MCF 10A (cell line): ENCODE measurements at regions of chr3 and their contacts with region 1.

Region 1: DNA sequence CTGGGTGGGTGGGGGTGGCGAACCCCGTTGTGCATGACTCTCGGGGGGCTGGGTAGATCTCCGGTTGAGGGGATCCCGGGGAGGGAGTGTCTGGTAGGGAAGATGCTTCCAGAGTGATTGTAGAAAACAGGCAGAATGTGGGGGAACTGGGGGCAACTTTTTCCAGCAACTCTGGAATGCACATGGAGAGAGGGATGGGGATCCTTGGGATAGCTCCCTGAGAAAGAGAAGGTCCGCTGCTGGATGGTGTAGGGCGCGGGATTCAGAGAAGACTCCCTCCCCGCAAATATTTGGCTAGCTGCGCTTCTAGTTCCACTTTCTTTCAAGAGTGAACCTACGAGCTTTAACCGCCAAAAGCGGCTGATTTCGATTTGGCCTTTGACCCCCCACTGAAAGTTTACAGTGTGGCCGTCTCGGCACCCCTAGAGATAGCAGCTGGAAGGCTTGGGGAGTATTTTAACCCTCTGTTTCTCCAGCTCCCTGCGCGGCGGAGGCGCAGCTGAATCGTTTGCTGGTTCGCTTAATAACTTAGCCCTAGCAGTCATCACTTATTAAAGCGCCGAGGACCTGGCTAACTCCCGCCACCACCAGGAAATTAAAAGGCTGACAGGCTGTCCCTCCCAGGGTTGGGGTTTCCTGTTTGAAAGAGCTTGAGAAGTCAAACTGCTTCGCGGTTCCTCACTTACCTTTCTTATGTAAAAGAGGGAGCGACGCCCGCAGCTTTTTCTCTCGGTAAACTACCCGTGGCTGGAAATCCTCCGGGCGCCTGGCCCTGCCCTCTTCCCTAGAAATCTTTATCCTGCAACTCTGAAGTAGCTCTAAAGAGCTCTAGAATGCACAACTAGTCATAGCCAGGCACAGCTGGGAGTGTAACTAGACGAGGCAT is 1.2 kb downstream of the PHLDB2 start:
- DNase-seq: peak; percentile 93
- H3K4me3 Mint-ChIP-seq: peak overlapping the region; percentile 98
- H3K27ac Mint-ChIP-seq: peak overlapping the region; percentile 94
- H3K4me1 Mint-ChIP-seq: peaks cover 50% of the 10 kb centered on the region
- H3K27me3 Mint-ChIP-seq: no peaks in the 10 kb centered on the region
- CTCF ChIP-seq: peak; percentile 61

Region 2: GRCh38 chr3:111712294-111713167 is 147.7 kb before region 1 on chr3:
- CTCF ChIA-PET with region 1: interaction called, 371 read pairs
- POLR2A ChIA-PET with region 1: interaction called, 207 read pairs
- intact Hi-C with region 1: loop called (anchors 1 kb)
- DNase-seq: peak; percentile 68
- H3K4me3 Mint-ChIP-seq: no peak overlapping the region
- H3K27ac Mint-ChIP-seq: peak overlapping the region; percentile 62
- H3K4me1 Mint-ChIP-seq: peaks cover 20% of the 10 kb centered on the region
- H3K27me3 Mint-ChIP-seq: no peaks in the 10 kb centered on the region
- CTCF ChIP-seq: no peak

Region 3: GRCh38 chr3:111745786-111746185 is 114.4 kb before region 1 on chr3:
- CTCF ChIA-PET with region 1: interaction called, 69 read pairs
- POLR2A ChIA-PET with region 1: interaction called, 11 read pairs
- intact Hi-C with region 1: no loop called
- DNase-seq: no peak
- H3K4me3 Mint-ChIP-seq: no peak overlapping the region
- H3K27ac Mint-ChIP-seq: peak overlapping the region; percentile 91
- H3K4me1 Mint-ChIP-seq: peaks cover 16% of the 10 kb centered on the region
- H3K27me3 Mint-ChIP-seq: no peaks in the 10 kb centered on the region
- CTCF ChIP-seq: no peak

Region 4: DNA sequence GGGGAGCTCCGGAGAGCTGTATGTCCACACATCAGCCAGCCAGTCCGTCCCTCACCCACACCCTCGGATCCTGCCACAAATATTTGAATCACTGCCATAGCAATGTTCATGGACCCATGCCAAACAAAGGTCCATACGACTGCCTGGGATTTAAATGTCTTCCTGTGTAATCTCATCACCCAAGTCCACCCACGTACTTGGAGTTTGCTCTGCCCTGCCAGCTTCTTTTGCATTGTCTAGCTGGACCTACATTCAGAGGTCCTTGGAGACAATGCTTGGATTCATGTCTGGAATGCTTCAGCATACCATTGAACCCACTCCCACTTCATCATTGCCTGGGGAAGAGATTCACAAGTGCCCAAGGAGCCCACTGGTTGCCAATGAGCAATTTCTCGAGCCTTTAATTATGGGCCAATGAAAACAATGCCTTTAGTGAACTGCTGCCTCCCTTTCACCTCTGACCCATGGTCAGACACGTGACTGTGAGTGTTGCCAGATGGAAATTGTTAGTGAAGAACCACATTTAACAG is 91.6 kb before region 1 on chr3:
- CTCF ChIA-PET with region 1: interaction called, 20 read pairs
- POLR2A ChIA-PET with region 1: interaction called, 10 read pairs
- intact Hi-C with region 1: no loop called
- DNase-seq: peak; percentile 96
- H3K4me3 Mint-ChIP-seq: no peak overlapping the region
- H3K27ac Mint-ChIP-seq: peak overlapping the region; percentile 82
- H3K4me1 Mint-ChIP-seq: peaks cover 38% of the 10 kb centered on the region
- H3K27me3 Mint-ChIP-seq: no peaks in the 10 kb centered on the region
- CTCF ChIP-seq: no peak

Region 5: DNA sequence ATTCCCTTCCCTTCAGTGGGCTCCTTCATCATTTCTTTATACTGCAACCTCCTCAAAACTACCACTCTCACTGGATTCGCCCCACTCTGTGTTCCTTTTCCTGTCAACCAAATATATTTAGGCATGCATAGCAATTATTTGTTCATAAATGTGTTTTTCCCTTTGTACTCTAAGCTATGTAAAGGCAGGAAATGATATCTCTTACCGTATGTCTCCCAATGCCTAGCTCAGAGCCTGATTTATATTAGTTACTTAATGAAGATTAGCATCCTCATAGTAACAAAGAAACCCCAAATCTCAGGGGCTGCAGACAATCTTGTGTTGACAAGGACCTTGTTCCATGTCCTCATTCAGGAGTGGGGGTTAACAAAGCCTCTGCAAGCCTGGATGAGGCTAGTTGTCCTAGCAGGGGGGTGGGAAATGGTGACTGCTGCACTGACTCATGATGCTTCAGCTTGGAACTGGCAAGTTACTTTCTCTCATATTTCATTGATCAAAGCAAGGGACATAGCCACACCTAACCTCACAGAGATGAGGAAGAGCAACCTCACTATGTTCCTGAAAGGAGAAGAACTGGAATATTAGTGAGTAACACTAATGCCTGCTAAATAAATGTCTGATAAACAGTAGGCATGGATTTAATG is 14.1 kb after region 1 on chr3:
- CTCF ChIA-PET with region 1: interaction called, 15 read pairs
- POLR2A ChIA-PET with region 1: interaction called, 9 read pairs
- intact Hi-C with region 1: no loop called
- DNase-seq: peak; percentile 65
- H3K4me3 Mint-ChIP-seq: no peak overlapping the region
- H3K27ac Mint-ChIP-seq: peak overlapping the region; percentile 9
- H3K4me1 Mint-ChIP-seq: peaks cover 38% of the 10 kb centered on the region
- H3K27me3 Mint-ChIP-seq: no peaks in the 10 kb centered on the region
- CTCF ChIP-seq: no peak

Region 6: DNA sequence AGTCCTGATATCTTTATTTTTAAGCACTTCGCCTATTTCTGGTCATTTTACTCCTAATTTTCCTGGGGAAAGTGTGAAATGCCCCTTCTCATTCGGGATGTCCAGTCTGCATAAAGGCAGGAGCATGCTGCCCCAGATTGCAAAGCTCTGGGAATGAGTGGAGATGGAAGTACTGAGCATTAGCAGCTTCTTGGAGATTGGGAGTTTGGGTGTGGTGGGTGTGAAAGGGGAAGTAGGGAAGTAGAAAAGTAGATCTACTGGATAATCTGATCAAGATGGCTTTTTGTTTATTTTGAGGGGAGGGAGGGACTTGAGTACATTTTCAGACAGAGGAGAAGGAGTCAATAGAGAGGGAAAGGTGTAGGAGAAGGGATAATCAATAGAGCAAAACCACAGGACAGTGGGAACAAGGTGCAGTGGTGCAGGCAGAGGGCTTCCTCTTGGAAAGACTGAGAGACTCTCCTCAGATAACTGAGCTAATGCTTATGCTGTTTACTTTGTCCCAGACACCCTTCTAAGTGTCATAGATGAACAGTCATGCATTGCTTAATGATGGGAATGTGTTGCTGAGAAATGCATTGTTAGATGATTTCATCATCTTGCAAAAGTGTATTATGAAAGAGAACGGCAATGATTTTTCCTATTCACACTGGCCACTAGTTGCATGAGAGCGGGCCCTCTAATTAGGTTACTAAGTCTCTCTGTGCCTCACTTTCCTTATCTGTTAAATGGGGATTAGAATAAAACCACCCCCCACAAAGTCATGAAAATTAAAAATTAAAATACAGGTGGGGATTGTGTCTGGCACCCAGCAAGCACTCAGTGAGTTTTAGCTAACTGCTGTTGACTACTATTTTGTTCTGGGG is 44.4 kb after region 1 on chr3:
- CTCF ChIA-PET with region 1: interaction called, 5 read pairs
- POLR2A ChIA-PET with region 1: interaction called, 43 read pairs
- intact Hi-C with region 1: no loop called
- DNase-seq: peak; percentile 94
- H3K4me3 Mint-ChIP-seq: no peak overlapping the region
- H3K27ac Mint-ChIP-seq: peak overlapping the region; percentile 81
- H3K4me1 Mint-ChIP-seq: peaks cover 33% of the 10 kb centered on the region
- H3K27me3 Mint-ChIP-seq: no peaks in the 10 kb centered on the region
- CTCF ChIP-seq: peak; percentile 23

Region 7: DNA sequence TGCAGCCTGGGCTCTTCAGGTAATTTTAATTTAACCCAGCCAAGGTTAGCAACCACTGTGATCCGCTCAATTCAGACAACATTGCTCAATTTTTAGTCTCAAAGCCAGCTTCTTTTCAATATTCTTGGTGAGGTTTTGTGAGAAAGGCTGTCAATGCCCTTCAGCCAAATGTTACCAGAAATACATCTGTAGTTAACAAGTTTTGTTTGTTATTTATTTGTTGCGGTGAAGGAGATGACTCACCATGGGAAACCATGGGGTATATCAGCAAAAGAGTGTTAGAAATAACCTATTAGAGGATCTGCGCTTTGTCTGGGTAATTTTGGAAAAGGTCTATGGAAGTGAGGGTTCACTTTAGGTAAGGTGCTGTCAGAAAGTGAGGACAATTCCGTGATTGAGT is 428.8 kb after region 1 on chr3:
- CTCF ChIA-PET with region 1: no interaction called
- POLR2A ChIA-PET with region 1: no interaction called
- intact Hi-C with region 1: no loop called
- DNase-seq: no peak
- H3K4me3 Mint-ChIP-seq: no peak overlapping the region
- H3K27ac Mint-ChIP-seq: no peak overlapping the region
- H3K4me1 Mint-ChIP-seq: peaks cover 11% of the 10 kb centered on the region
- H3K27me3 Mint-ChIP-seq: no peaks in the 10 kb centered on the region
- CTCF ChIP-seq: no peak